ENCODE measurements at regions of chr5 and their contacts with region 1.

Region 1: GRCh38 chr5:150486402-150487198 is 21.3 kb upstream of the NDST1 start:
- DNase-seq: peak; percentile 79
- H3K4me3 ChIP-seq: peak overlapping the region; percentile 92
- H3K27ac ChIP-seq: peak overlapping the region; percentile 73
- H3K4me1 ChIP-seq: peaks cover 57% of the 10 kb centered on the region
- CTCF ChIP-seq: no peak

Region 2: GRCh38 chr5:150409638-150410523 is 76.7 kb before region 1 on chr5:
- CTCF ChIA-PET with region 1: no interaction called
- POLR2A ChIA-PET with region 1: interaction called, 10 read pairs
- intact Hi-C with region 1: no loop called
- DNase-seq: peak; percentile 84
- H3K4me3 ChIP-seq: peak overlapping the region; percentile 99
- H3K27ac ChIP-seq: peak overlapping the region; percentile 97
- H3K4me1 ChIP-seq: peaks cover 71% of the 10 kb centered on the region
- CTCF ChIP-seq: no peak

Region 3: DNA sequence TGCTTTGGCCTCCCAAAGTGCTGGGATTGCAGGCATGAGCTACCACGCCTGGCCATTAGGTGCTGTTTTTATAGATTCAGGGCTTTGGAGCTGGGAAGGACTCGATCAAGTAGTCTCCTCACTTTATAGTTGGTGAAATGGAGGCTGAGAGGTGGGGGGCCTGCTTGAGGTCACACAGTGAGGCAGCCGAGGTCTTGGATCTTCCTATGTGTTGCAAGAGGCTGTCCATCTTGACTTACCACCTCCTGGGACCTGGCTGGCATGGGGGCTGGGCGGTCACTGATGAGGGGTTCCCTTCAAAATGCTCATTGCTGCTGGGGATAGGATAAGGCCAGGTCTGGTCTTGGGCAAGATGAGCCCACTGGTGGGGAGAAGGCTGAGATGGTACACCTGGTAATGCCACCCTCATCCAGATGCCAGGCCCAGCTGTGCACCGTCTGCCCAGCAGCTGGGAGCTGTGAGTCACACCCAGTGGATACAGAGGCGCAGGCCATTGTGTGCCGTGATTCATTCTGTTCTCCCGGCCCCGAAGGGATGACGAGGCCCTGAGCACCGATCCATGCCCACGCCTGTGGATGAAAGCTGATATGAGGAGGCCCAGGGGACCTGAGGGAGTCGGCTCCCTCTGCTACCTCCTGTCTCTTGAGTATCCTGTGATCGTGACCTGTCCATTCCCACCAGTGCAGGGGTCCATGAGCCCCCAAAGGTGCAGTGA is 10.8 kb after region 1 on chr5:
- CTCF ChIA-PET with region 1: interaction called, 10 read pairs
- POLR2A ChIA-PET with region 1: interaction called, 19 read pairs
- intact Hi-C with region 1: no loop called
- DNase-seq: no peak
- H3K4me3 ChIP-seq: no peak overlapping the region
- H3K27ac ChIP-seq: no peak overlapping the region
- H3K4me1 ChIP-seq: peaks cover 13% of the 10 kb centered on the region
- CTCF ChIP-seq: no peak

Region 4: DNA sequence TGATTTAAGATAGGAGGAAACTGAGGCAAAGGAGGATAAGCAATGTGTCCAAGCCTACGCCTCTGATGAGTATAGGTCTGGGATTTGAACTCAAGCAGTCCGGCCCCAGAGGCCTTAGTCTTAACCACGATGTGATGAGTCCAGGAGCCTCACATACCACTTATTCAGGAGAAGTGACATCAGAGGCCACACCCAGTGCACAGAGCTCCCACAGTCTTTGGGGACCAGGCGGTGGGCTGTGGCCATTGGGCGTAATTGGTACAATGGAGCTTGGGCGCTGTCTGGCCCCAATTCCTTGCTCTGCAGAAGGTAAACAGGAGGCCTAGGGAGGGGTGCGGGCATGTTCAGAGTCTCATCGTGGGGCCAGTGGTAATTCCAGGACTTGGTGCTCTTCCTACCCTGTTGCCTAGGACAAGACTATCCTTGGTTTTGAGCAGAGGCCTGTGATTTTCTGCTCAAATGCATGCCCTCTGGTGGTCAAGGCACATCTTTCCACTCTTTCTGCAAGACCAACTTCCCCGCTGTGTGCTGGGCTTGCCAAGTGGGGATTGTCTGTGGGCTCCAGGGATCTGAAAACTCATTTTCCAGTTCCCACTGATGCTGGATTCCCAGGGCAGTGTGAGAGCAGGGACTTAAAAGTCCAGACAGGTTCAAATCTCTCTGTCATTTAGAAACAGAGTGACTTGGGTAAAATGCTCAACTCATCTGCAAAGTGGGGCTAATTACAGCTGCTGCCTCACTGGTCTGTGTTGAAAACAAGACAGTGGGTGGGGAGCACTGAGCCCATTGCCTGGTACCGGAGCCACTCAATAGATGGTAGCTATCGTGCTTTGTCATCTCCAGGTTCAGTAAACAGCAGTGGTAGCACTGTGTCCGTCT is 37.1 kb after region 1 on chr5:
- CTCF ChIA-PET with region 1: interaction called, 5 read pairs
- POLR2A ChIA-PET with region 1: interaction called, 13 read pairs
- intact Hi-C with region 1: loop called (anchors 1 kb)
- DNase-seq: peak; percentile 73
- H3K4me3 ChIP-seq: no peak overlapping the region
- H3K27ac ChIP-seq: no peak overlapping the region
- H3K4me1 ChIP-seq: peaks cover 39% of the 10 kb centered on the region
- CTCF ChIP-seq: peak; percentile 80

Region 5: GRCh38 chr5:150615141-150615699 is 128.6 kb after region 1 on chr5:
- CTCF ChIA-PET with region 1: no interaction called
- POLR2A ChIA-PET with region 1: no interaction called
- intact Hi-C with region 1: no loop called
- DNase-seq: no peak
- H3K4me3 ChIP-seq: no peak overlapping the region
- H3K27ac ChIP-seq: no peak overlapping the region
- H3K4me1 ChIP-seq: no peaks in the 10 kb centered on the region
- CTCF ChIP-seq: no peak

Region 6: DNA sequence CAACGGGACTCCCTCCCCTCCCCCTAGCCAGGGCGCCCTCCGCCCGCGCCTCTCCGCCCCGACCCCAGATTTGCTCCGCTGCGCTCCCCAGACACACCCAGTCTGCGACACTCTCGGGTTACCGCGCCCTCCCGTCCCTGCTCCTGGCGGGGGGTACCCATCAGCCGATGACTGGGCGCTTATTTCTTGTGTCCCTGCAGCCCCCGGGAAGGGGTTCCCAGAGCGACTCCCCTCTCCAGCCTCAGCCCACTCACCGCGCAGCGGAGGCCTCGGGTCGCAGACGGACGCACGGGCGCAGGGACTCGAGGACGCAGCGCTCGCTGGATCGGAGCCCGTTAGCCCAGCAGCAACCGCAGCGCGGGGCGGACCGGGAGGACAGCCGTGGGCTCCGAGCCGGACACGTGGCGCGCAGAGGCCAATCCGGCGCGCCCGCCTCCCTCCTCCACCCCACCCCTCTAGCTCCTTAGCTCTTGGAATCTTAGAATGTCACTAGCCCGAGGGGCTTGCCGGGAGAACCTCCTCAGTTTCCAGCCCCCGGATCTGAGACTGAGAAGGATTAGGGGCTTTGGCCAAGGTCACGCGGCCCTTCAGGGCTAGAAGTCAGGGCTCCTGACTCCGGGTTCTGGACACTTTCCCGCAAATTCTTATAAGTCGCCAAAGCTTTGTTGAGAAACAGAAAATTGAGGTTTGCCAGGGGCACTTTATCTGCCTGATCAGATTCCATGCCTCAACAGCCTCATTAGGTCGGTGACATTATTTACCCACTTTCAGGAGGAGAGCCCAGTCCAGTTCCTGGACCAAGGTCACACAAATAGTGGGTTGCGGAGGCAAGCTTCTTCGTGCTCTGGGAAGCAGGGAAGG is 671.1 kb after region 1 on chr5 and contains the start of gene ANXA6:
- CTCF ChIA-PET with region 1: no interaction called
- POLR2A ChIA-PET with region 1: no interaction called
- intact Hi-C with region 1: loop called (anchors 10 kb)
- DNase-seq: no peak
- H3K4me3 ChIP-seq: peak within 1 kb of the TSS; percentile 59
- H3K27ac ChIP-seq: peak within 1 kb of the TSS; percentile 68
- H3K4me1 ChIP-seq: peaks cover 72% of the 10 kb centered on the region
- CTCF ChIP-seq: no peak
- total RNA-seq, gene ANXA6: 26.1 and 35.6 TPM in 2 replicates

Measured in OCI-LY7 (cell line).